ENCODE measurements at regions of chr17 and their contacts with region 1.

Region 1: GRCh38 chr17:38752119-38752929 is at the start of gene PSMB3:
- DNase-seq: peak; percentile 99
- H3K4me3 Mint-ChIP-seq: peak within 1 kb of the TSS; percentile 96
- H3K27ac Mint-ChIP-seq: peak within 1 kb of the TSS; percentile 98
- H3K4me1 Mint-ChIP-seq: peaks cover 28% of the 10 kb centered on the region
- H3K27me3 Mint-ChIP-seq: no peaks in the 10 kb centered on the region
- CTCF ChIP-seq: no peak
- total RNA-seq, gene PSMB3: 124 and 145 TPM in 2 replicates

Region 2: GRCh38 chr17:38702166-38702899 is 50.0 kb before region 1 on chr17:
- CTCF ChIA-PET with region 1: no interaction called
- POLR2A ChIA-PET with region 1: interaction called, 29 read pairs
- intact Hi-C with region 1: loop called (anchors 10 kb)
- DNase-seq: peak; percentile 88
- H3K4me3 Mint-ChIP-seq: peak overlapping the region; percentile 99
- H3K27ac Mint-ChIP-seq: peak overlapping the region; percentile 75
- H3K4me1 Mint-ChIP-seq: peaks cover 17% of the 10 kb centered on the region
- H3K27me3 Mint-ChIP-seq: peaks cover 10% of the 10 kb centered on the region
- CTCF ChIP-seq: no peak